ENCODE measurements at regions of chr5 and their contacts with region 1.

Region 1: GRCh38 chr5:118017536-118017935 is 970.8 kb downstream of the DTWD2 start:
- DNase-seq: no peak
- ATAC-seq: no peak
- H3K4me3 ChIP-seq: no peak overlapping the region
- H3K4me3 Mint-ChIP-seq: no peak overlapping the region
- H3K27ac ChIP-seq: no peak overlapping the region
- H3K27ac Mint-ChIP-seq: no peak overlapping the region
- H3K4me1 ChIP-seq: no peaks in the 10 kb centered on the region
- H3K4me1 Mint-ChIP-seq: no peaks in the 10 kb centered on the region
- H3K27me3 ChIP-seq: no peaks in the 10 kb centered on the region
- H3K27me3 Mint-ChIP-seq: no peaks in the 10 kb centered on the region
- CTCF ChIP-seq: no peak

Region 2: DNA sequence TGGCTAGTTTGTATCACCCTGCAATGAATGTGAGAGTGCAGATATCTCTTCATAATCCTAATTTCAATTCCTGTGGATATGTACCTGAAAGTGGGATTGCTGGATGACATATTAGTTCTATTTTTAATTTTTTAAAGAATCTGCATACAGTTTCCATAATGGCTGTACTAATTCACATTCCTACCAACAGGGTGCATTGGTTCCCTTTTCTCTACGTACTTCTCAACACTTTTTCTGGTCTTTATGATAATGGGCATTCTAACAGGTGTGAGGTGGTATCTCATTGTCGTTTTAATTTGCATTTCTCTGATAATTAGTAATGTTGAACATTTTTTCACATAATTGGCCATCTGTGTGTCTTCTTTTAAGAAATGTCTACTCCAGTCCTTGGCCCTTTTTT is 43.3 kb after region 1 on chr5:
- CTCF ChIA-PET with region 1: no interaction called
- POLR2A ChIA-PET with region 1: no interaction called
- intact Hi-C with region 1: loop called in 1 of 2 experiments (anchors 1 kb)
- DNase-seq: no peak
- ATAC-seq: no peak
- H3K4me3 ChIP-seq: no peak overlapping the region
- H3K4me3 Mint-ChIP-seq: no peak overlapping the region
- H3K27ac ChIP-seq: no peak overlapping the region
- H3K27ac Mint-ChIP-seq: no peak overlapping the region
- H3K4me1 ChIP-seq: no peaks in the 10 kb centered on the region
- H3K4me1 Mint-ChIP-seq: no peaks in the 10 kb centered on the region
- H3K27me3 ChIP-seq: no peaks in the 10 kb centered on the region
- H3K27me3 Mint-ChIP-seq: no peaks in the 10 kb centered on the region
- CTCF ChIP-seq: no peak